ENCODE measurements at regions of chr14 and their contacts with region 1.

Region 1: DNA sequence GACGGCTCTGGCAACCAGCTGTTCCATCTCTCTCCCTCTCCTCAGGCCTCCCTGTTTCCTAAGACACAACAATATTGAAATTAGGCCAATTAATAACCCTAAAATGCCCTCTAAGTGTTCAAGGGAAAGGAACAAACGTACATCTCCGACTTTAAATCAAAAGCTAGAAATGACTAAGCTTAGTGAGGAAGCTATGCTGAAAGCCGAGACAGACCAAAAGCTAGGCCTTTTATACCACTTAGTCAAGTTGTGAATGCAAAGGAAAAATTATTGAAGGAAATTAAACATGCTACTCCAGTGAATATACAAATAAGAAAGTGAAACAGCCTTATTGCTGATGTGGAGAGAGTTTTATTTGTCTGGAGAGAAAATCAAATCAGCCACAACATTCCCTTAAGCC is 61.8 kb upstream of the CATSPERB start:
- DNase-seq: no peak
- H3K4me3 ChIP-seq: no peak overlapping the region
- H3K27ac ChIP-seq: no peak overlapping the region
- H3K4me1 ChIP-seq: no peaks in the 10 kb centered on the region
- H3K27me3 ChIP-seq: peaks cover 32% of the 10 kb centered on the region
- CTCF ChIP-seq: no peak

Region 2: DNA sequence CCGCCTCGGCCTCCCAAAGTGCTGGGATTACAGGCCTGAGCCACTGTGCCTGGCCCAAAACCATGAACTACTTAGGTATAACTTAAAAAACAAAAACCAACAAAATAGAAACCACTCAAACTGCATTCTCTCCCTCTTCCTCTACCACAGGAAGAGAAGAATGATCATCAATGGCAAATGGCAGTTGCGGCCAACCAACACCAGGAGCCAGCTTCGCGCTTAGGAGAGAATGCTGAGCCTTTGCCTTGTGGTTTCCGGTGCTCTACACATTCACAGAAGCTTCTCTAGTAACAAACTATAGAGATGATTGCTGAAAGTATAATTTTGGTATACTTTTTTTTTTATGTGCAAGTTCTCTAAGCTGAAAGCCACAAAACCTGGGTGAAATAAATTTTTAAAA is 78.9 kb before region 1 on chr14:
- CTCF ChIA-PET with region 1: no interaction called
- POLR2A ChIA-PET with region 1: interaction called, 14 read pairs
- intact Hi-C with region 1: no loop called
- DNase-seq: no peak
- H3K4me3 ChIP-seq: no peak overlapping the region
- H3K27ac ChIP-seq: no peak overlapping the region
- H3K4me1 ChIP-seq: no peaks in the 10 kb centered on the region
- H3K27me3 ChIP-seq: no peaks in the 10 kb centered on the region
- CTCF ChIP-seq: peak; percentile 18; the same call in 1 of the 2 replicates

Measured in A673 (cell line).